ENCODE measurements at regions of chr20 and their contacts with region 1.

Region 1: DNA sequence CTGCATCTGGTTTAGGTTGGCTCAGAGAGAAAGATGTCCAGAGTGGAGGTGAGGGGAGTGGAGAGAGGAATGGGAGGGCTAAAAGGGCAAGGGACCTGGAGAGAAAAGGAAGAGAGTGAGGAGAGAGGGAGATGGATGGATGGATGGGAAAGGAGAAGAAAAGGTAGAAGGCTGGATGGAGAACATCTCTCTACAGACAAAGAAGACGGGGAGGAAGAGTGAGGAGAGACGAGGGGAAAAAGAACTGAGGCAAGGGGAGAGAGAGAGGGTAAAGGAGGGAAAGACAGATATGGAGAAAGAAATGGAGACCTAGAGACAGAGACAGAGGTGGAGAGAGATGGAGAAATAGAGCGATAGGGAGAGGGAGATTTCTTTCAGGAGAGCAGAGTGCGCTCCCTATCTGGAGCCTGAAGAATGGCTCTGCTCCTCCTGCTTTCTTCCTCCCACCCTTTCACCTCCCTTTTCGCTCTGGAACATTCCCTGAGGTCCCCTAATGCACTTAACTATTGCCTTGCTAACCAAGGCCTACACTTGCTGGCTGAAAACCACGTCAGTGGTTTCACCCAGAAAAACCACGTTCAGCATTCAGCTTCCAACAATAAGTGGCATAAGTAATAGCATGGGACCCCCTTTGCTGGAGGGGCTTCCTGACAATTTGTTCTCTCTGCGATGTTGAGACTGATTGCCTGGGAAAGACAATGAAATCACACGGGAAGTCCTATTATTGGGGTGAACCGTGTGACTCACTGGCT is 286.3 kb downstream of the CDH26 start:
- DNase-seq: no peak
- H3K4me3 ChIP-seq: no peak overlapping the region
- H3K27ac ChIP-seq: no peak overlapping the region
- H3K4me1 ChIP-seq: no peaks in the 10 kb centered on the region
- H3K27me3 ChIP-seq: no peaks in the 10 kb centered on the region
- CTCF ChIP-seq: no peak
- POLR2A ChIP-seq: no peak

Region 2: DNA sequence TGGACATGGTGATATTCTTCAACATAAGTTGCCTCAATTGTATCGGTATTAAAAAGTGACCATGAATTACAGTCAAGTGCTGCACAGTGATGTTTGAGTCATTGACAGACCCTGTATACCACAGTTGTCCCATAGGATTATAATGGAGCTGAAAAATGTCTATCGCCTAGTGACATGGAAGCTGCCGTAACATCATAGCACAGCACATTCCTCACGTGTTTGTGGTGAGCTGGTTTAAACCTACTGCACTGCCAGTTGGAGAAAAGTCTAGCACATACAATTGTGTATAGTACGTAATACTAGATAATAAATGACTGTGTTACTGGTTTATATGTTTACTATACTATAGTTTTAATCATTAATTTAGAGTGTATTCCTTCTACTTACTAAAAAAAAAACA is 136.2 kb before region 1 on chr20:
- intact Hi-C with region 1: no loop called
- DNase-seq: no peak
- H3K4me3 ChIP-seq: no peak overlapping the region
- H3K27ac ChIP-seq: no peak overlapping the region
- H3K4me1 ChIP-seq: no peaks in the 10 kb centered on the region
- H3K27me3 ChIP-seq: no peaks in the 10 kb centered on the region
- CTCF ChIP-seq: no peak
- POLR2A ChIP-seq: no peak

Region 3: DNA sequence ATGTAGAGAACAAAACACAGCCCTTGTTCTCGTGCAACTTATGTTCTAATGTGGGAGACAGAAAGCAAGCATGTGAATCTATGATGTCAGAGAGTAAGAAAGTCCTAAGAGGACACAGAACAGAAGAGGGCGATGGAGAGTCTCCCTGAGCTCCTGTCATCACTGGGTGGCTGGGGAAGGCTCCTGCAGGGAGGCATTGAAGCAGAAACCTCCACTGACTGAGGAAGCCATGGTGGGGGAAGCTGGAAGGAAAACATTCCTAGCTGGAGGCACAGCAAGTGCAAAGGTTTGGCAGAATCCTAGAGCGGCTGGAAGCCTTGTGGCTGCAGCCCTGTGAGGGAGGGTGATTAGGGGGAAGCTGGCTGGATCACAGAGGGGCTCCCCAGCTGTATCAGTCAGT is 38.3 kb before region 1 on chr20:
- intact Hi-C with region 1: loop called (anchors 1 kb)
- DNase-seq: no peak
- H3K4me3 ChIP-seq: no peak overlapping the region
- H3K27ac ChIP-seq: no peak overlapping the region
- H3K4me1 ChIP-seq: no peaks in the 10 kb centered on the region
- H3K27me3 ChIP-seq: no peaks in the 10 kb centered on the region
- CTCF ChIP-seq: no peak
- POLR2A ChIP-seq: no peak

Region 4: GRCh38 chr20:60262967-60263603 is 18.5 kb after region 1 on chr20:
- intact Hi-C with region 1: no loop called
- DNase-seq: no peak
- H3K4me3 ChIP-seq: no peak overlapping the region
- H3K27ac ChIP-seq: no peak overlapping the region
- H3K4me1 ChIP-seq: no peaks in the 10 kb centered on the region
- H3K27me3 ChIP-seq: no peaks in the 10 kb centered on the region
- CTCF ChIP-seq: peak in 1 of 3 donors; percentile 24
- POLR2A ChIP-seq: no peak

Region 5: GRCh38 chr20:61120595-61121515 is 876.3 kb after region 1 on chr20:
- intact Hi-C with region 1: no loop called
- DNase-seq: peak in 1 of 2 donors; percentile 32
- H3K4me3 ChIP-seq: no peak overlapping the region
- H3K27ac ChIP-seq: no peak overlapping the region
- H3K4me1 ChIP-seq: no peaks in the 10 kb centered on the region
- H3K27me3 ChIP-seq: no peaks in the 10 kb centered on the region
- CTCF ChIP-seq: peak in 2 of 3 donors; percentile 27 to 34
- POLR2A ChIP-seq: no peak

Region 6: DNA sequence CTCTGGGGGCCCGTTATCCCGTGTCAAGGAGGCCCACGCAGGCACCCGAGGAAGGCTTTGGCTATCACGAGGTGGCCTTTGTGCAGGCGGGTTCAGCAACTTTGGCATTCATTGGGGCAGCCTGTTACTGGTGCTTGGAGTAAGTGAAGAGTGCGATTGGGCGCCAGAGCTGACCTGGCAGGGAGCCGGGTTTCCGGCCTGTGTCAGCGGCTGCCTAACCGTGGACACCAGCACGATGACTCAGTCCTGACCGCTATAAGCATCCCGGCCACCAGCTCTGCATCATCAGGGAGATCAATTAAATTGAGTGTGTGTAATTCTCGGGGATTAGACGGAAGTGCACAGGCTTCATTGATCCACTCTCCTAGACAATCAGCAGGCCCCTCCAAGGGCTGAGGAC is 1053.4 kb after region 1 on chr20:
- intact Hi-C with region 1: no loop called
- DNase-seq: no peak
- H3K4me3 ChIP-seq: no peak overlapping the region
- H3K27ac ChIP-seq: no peak overlapping the region
- H3K4me1 ChIP-seq: no peaks in the 10 kb centered on the region
- H3K27me3 ChIP-seq: no peaks in the 10 kb centered on the region
- CTCF ChIP-seq: no peak
- POLR2A ChIP-seq: no peak

Measured in breast epithelium (tissue), 4 donors.